Endothelial cell of umbilical vein (primary cell): ENCODE measurements at regions of chr5 and their contacts with region 1.

Region 1: GRCh38 chr5:171484460-171484899 is 65.0 kb downstream of the FGF18 start:
- DNase-seq: peak; percentile 33
- H3K4me3 ChIP-seq: no peak overlapping the region
- H3K27ac ChIP-seq: no peak overlapping the region
- H3K4me1 ChIP-seq: no peaks in the 10 kb centered on the region
- H3K27me3 ChIP-seq: peaks cover 0 to 2% of the 10 kb centered on the region in 2 experiments
- CTCF ChIP-seq: peak; percentile 71 to 83
- POLR2A ChIP-seq: no peak

Region 2: GRCh38 chr5:171494452-171495121 is 10.1 kb after region 1 on chr5:
- CTCF ChIA-PET with region 1: interaction called, 14 read pairs
- POLR2A ChIA-PET with region 1: no interaction called
- dilution Hi-C with region 1: no loop called
- intact Hi-C with region 1: no loop called
- DNase-seq: peak; percentile 63
- H3K4me3 ChIP-seq: no peak overlapping the region
- H3K27ac ChIP-seq: no peak overlapping the region
- H3K4me1 ChIP-seq: peaks cover 8% of the 10 kb centered on the region
- H3K27me3 ChIP-seq: peaks cover 0 to 3% of the 10 kb centered on the region in 2 experiments
- CTCF ChIP-seq: no peak
- POLR2A ChIP-seq: no peak

Region 3: DNA sequence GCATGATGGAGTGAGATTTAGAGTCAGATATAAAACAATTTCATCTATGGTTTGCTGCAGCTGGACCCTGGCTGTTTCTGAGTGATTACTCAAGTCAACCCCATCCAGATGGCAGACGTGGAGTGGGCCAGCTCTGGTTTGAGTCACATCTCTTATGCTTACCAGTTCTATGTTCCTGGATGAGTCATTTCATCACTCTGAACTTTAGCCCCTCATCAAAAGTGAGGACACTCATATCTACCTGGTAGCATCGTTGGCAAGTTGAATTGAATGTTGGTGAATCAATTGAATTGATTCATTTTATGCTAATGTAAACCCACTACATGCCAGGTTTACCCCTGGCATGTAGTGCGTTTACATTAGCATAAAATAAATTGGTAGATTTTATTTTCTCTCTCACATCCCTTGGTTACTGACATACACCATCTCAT is 111.3 kb after region 1 on chr5:
- CTCF ChIA-PET with region 1: interaction called, 5 read pairs
- POLR2A ChIA-PET with region 1: no interaction called
- dilution Hi-C with region 1: no loop called
- intact Hi-C with region 1: loop called (anchors 2 kb)
- DNase-seq: peak; percentile 79
- H3K4me3 ChIP-seq: no peak overlapping the region
- H3K27ac ChIP-seq: peak overlapping the region; percentile 63
- H3K4me1 ChIP-seq: peaks cover 22% of the 10 kb centered on the region
- H3K27me3 ChIP-seq: peaks cover 0 to 2% of the 10 kb centered on the region in 2 experiments
- CTCF ChIP-seq: no peak
- POLR2A ChIP-seq: no peak

Region 4: GRCh38 chr5:171858303-171858702 is 373.8 kb after region 1 on chr5:
- CTCF ChIA-PET with region 1: interaction called, 4 read pairs
- POLR2A ChIA-PET with region 1: no interaction called
- dilution Hi-C with region 1: no loop called
- intact Hi-C with region 1: loop called (anchors 5 kb)
- DNase-seq: no peak
- H3K4me3 ChIP-seq: no peak overlapping the region
- H3K27ac ChIP-seq: no peak overlapping the region
- H3K4me1 ChIP-seq: no peaks in the 10 kb centered on the region
- H3K27me3 ChIP-seq: no peaks in the 10 kb centered on the region
- CTCF ChIP-seq: peak; percentile 37 to 48
- POLR2A ChIP-seq: no peak

Region 5: GRCh38 chr5:172044631-172045314 is 560.3 kb after region 1 on chr5:
- CTCF ChIA-PET with region 1: no interaction called
- POLR2A ChIA-PET with region 1: no interaction called
- dilution Hi-C with region 1: no loop called
- intact Hi-C with region 1: loop called (anchors 10 kb)
- DNase-seq: no peak
- H3K4me3 ChIP-seq: no peak overlapping the region
- H3K27ac ChIP-seq: no peak overlapping the region
- H3K4me1 ChIP-seq: peaks cover 19% of the 10 kb centered on the region
- H3K27me3 ChIP-seq: no peaks in the 10 kb centered on the region
- CTCF ChIP-seq: no peak
- POLR2A ChIP-seq: no peak